ENCODE measurements at regions of chr7 and their contacts with region 1.

Region 1: GRCh38 chr7:82572195-82572880 is 128.8 kb upstream of the CACNA2D1 start:
- DNase-seq: peak; percentile 69
- CTCF ChIP-seq: peak; percentile 83

Region 2: GRCh38 chr7:81499262-81500116 is 1072.8 kb before region 1 on chr7:
- in situ Hi-C with region 1: loop called (anchors 25 kb)
- DNase-seq: peak; percentile 24
- CTCF ChIP-seq: peak; percentile 22

Region 3: GRCh38 chr7:82044497-82045080 is 527.7 kb before region 1 on chr7:
- in situ Hi-C with region 1: loop called (anchors 25 kb)
- DNase-seq: peak; percentile 8
- CTCF ChIP-seq: peak; percentile 41

Region 4: DNA sequence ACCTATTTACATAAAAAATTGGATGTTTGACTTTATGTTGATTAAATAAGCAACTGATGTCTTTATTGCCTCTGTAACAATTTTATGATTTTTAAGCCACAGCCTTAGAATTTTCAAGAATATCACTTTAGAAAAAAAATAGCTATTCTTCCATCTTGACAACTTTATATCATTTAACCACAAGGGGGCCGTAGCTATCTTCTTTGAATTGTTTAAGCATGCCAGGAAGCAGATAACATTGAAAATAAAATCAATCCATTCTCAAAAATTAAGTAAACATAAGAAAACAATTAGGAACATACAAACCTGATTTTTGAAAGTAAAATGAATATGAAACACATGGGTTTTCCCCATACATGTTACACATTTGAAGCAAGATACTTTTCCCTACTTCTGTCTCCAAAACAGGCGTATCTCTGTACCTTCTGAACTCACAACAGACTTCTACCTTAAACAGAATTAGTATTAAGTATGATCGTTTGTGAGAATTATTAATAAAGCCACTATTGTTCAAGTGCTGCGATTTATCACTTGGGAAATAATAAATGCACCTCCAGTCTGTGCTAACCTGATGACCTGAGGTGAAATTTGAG is 337.8 kb before region 1 on chr7:
- in situ Hi-C with region 1: loop called (anchors 10 kb)
- DNase-seq: peak; percentile 12
- CTCF ChIP-seq: peak; percentile 12

Region 5: DNA sequence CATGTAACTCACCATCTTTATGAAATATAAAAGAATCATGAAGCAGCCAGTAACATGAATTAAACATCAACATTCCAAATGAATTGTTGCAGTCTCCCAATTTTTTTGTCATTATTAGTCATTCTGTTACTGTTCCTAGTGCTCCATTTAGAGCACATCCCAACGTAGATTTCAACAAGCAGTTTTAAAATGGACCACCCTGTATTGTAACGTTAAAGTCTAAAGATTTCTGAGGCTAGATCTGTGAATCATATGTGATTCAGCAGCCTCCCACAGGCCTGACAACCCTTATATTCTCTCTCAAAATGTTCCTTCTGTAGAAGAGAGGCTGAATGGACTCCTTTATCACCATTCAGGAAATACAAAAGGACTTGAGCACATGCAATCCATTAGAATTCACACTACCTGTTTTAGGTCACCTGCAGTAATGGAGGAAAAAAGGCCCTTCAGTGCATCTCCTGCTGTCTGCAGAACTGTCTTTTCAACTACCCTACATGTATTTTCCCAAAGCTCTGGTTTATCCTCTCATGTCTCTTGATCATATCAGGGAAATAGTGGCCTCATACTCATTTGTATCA is 210.1 kb before region 1 on chr7:
- in situ Hi-C with region 1: no loop called
- DNase-seq: no peak
- CTCF ChIP-seq: no peak

Measured in GM13976 (cell line).